Sigmoid colon (tissue), 7 donors: ENCODE measurements at regions of chr17 and their contacts with region 1.

Region 1: DNA sequence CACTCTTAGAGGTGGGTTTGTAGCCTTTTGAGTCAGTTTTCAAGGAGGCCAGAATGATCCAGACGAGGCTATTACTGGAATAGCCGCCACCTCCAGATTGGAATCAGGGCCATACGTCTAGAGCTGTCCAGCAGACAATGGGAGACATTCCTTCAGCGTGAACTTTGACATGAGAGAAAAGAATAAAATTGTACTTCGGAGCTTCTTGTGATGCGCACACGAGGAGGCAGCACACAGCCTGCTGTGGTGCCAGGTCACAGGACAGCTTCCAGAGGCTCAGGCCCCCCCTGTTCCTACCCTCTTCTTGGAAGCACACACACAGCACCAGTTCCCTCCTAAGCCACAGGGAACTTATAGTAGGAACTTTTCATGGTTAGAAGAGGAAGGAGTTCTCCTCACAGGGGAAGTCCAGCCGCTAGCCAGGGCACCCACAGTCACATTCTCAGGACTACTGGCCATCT is 81.0 kb downstream of the VPS53 start:
- DNase-seq: peak; percentile 80
- H3K4me3 ChIP-seq: no peak overlapping the region
- H3K27ac ChIP-seq: peak overlapping the region; percentile 66 to 82 (median 72)
- H3K4me1 ChIP-seq: peaks cover 0 to 30% (median 27%) of the 10 kb centered on the region in 4 donors
- H3K27me3 ChIP-seq: no peaks in the 10 kb centered on the region
- CTCF ChIP-seq: peak in 1 of 4 experiments; percentile 30
- EP300 ChIP-seq: no peak
- POLR2A ChIP-seq: no peak

Region 2: GRCh38 chr17:511001-511698 is 122.5 kb before region 1 on chr17:
- intact Hi-C with region 1: loop called (anchors 5 kb)
- DNase-seq: peak; percentile 74
- H3K4me3 ChIP-seq: no peak overlapping the region
- H3K27ac ChIP-seq: peak overlapping the region; percentile 19 to 80 (median 60)
- H3K4me1 ChIP-seq: peaks cover 0 to 41% (median 32%) of the 10 kb centered on the region in 4 donors
- H3K27me3 ChIP-seq: no peaks in the 10 kb centered on the region
- CTCF ChIP-seq: no peak
- EP300 ChIP-seq: no peak
- POLR2A ChIP-seq: no peak